ENCODE measurements at regions of chr1 and their contacts with region 1.

Region 1: GRCh38 chr1:247487057-247487456 is 29.2 kb upstream of the OR2B11 start:
- DNase-seq: peak; percentile 35
- H3K4me3 ChIP-seq: no peak overlapping the region
- H3K27ac ChIP-seq: no peak overlapping the region
- H3K4me1 ChIP-seq: no peaks in the 10 kb centered on the region
- H3K27me3 ChIP-seq: no peaks in the 10 kb centered on the region
- CTCF ChIP-seq: peak in 1 of 2 donors; percentile 37

Region 2: DNA sequence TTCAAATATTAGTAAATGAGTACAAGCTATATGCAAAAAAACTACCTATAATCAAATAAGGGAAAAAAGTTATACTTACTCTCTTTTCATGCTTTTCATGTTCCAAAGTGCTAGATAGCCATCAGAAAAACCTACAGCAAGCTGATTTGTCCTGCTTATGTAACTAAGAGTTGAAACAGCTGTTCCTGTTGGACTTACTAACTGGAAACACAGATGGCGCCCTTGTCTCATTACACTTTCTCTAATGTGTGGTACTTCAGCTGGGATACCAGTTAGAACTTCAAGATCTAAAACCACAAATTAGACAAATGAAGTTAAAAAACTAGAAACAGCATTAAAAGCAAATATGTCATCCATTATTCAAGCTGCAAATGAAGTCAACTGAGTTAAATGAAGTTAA is 579.6 kb before region 1 on chr1:
- CTCF ChIA-PET with region 1: no interaction called
- dilution Hi-C with region 1: no loop called
- in situ Hi-C with region 1: no loop called
- intact Hi-C with region 1: loop called (anchors 10 kb)
- DNase-seq: peak; percentile 5
- H3K4me3 ChIP-seq: no peak overlapping the region
- H3K27ac ChIP-seq: no peak overlapping the region
- H3K4me1 ChIP-seq: no peaks in the 10 kb centered on the region
- H3K27me3 ChIP-seq: no peaks in the 10 kb centered on the region
- CTCF ChIP-seq: peak; percentile 3 to 54

Region 3: DNA sequence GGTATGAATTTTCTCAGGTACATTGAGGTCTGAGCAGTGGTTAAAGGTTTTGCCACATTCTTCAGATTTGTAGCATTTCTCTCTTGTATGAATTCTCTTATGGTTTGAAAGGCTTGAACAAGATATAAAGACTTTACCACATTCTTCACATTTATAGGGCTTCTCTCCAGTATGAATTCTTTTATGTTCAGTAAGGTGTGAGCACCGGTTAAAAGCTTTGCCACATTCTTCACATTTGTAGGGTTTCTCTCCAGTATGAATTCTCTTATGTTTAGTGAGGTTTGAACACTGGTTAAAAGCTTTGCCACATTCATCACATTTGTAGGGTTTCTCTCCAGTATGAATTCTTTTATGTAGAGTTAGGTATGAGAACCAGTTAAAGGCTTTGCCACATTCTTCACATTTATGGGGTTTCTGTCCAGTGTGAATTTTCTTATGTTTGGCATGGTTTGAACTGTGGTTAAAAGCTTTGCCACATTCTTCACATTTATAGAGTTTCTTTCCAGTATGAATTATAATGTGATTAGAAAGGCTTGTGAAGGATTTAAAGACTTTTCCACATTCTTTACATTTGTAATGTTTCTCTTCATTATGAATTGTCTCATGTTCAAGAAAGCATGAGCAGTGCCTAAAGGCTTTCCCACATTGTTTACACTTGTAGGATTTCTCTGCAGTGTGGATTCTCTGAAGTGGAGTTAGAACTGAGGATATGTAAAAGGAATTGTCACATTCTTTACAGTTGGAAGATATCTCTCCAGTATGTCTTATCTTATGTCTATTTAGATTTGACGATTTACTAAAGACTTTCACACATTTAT is 296.9 kb before region 1 on chr1:
- CTCF ChIA-PET with region 1: no interaction called
- dilution Hi-C with region 1: no loop called
- in situ Hi-C with region 1: no loop called
- intact Hi-C with region 1: no loop called
- DNase-seq: no peak
- H3K4me3 ChIP-seq: no peak overlapping the region
- H3K27ac ChIP-seq: no peak overlapping the region
- H3K4me1 ChIP-seq: no peaks in the 10 kb centered on the region
- H3K27me3 ChIP-seq: no peaks in the 10 kb centered on the region
- CTCF ChIP-seq: no peak

Region 4: GRCh38 chr1:247373721-247374141 is 113.3 kb before region 1 on chr1:
- CTCF ChIA-PET with region 1: no interaction called
- dilution Hi-C with region 1: no loop called
- in situ Hi-C with region 1: no loop called
- intact Hi-C with region 1: loop called (anchors 1 kb)
- DNase-seq: peak; percentile 22
- H3K4me3 ChIP-seq: peak overlapping the region; percentile 40 to 42 (median 42)
- H3K27ac ChIP-seq: no peak overlapping the region
- H3K4me1 ChIP-seq: no peaks in the 10 kb centered on the region
- H3K27me3 ChIP-seq: no peaks in the 10 kb centered on the region
- CTCF ChIP-seq: peak; percentile 46 to 56

Region 5: GRCh38 chr1:247390116-247390791 is 96.8 kb before region 1 on chr1:
- CTCF ChIA-PET with region 1: no interaction called
- dilution Hi-C with region 1: no loop called
- in situ Hi-C with region 1: no loop called
- intact Hi-C with region 1: loop called (anchors 1 kb)
- DNase-seq: peak; percentile 66
- H3K4me3 ChIP-seq: peak overlapping the region in 1 of 3 experiments; percentile 14
- H3K27ac ChIP-seq: no peak overlapping the region
- H3K4me1 ChIP-seq: no peaks in the 10 kb centered on the region
- H3K27me3 ChIP-seq: no peaks in the 10 kb centered on the region
- CTCF ChIP-seq: peak; percentile 79 to 90